ENCODE measurements at regions of chr1 and their contacts with region 1.

Region 1: DNA sequence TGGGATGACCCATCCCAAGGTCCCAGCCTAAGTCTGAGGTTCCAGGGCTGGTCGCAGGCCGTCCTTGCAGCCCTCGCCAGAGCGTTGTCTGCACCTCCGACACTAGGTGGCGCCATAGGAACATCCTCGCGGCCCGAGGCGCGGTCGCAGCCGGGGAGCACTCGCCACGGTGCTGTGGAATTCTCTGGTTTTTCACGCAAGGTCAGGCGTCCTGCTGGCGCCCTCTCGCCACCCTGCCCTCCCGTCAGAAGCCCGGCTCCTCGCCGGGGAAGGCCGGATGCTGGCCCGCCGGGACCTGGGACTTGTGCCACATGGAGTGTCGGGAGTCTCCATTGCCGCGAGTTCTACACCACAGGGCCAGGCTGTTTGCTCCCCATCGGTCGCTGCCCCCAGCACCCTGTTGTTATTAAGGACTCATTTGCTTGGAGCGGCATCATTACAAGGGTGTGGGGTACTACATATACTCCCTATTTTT is 196.8 kb upstream of the LMO4 start:
- DNase-seq: peak; percentile 47
- ATAC-seq: peak; percentile 97
- H3K4me3 ChIP-seq: peak overlapping the region; percentile 41 to 70 (median 42); a peak in 5 of 6 replicates
- H3K27ac ChIP-seq: no peak overlapping the region
- H3K4me1 ChIP-seq: no peaks in the 10 kb centered on the region
- H3K27me3 ChIP-seq: peaks cover 3 to 33% of the 10 kb centered on the region in 2 experiments; a peak in 3 of 5 replicates
- CTCF ChIP-seq: peak; percentile 98
- EP300 ChIP-seq: no peak
- POLR2A ChIP-seq: no peak
- RAD21 ChIP-seq: peak; percentile 94

Region 2: GRCh38 chr1:87151500-87152421 is 19.9 kb after region 1 on chr1:
- CTCF ChIA-PET with region 1: no interaction called
- POLR2A ChIA-PET with region 1: no interaction called
- in situ Hi-C with region 1: no loop called
- intact Hi-C with region 1: no loop called
- DNase-seq: no peak
- ATAC-seq: no peak
- H3K4me3 ChIP-seq: no peak overlapping the region
- H3K27ac ChIP-seq: no peak overlapping the region
- H3K4me1 ChIP-seq: no peaks in the 10 kb centered on the region
- H3K27me3 ChIP-seq: peaks cover 1 to 8% of the 10 kb centered on the region in 2 experiments; a peak in 3 of 5 replicates
- CTCF ChIP-seq: no peak
- EP300 ChIP-seq: no peak
- POLR2A ChIP-seq: no peak
- RAD21 ChIP-seq: no peak

Region 3: GRCh38 chr1:87266284-87266683 is 134.4 kb after region 1 on chr1:
- CTCF ChIA-PET with region 1: no interaction called
- POLR2A ChIA-PET with region 1: no interaction called
- in situ Hi-C with region 1: no loop called
- intact Hi-C with region 1: loop called (anchors 1 kb)
- DNase-seq: no peak
- ATAC-seq: no peak
- H3K4me3 ChIP-seq: no peak overlapping the region
- H3K27ac ChIP-seq: no peak overlapping the region
- H3K4me1 ChIP-seq: no peaks in the 10 kb centered on the region
- H3K27me3 ChIP-seq: 0 out of 5 replicates have a peak, but pooled peaks cover 0 to 3% of the 10 kb centered on the region in 2 experiments
- CTCF ChIP-seq: no peak
- EP300 ChIP-seq: no peak
- POLR2A ChIP-seq: no peak
- RAD21 ChIP-seq: no peak

Region 4: DNA sequence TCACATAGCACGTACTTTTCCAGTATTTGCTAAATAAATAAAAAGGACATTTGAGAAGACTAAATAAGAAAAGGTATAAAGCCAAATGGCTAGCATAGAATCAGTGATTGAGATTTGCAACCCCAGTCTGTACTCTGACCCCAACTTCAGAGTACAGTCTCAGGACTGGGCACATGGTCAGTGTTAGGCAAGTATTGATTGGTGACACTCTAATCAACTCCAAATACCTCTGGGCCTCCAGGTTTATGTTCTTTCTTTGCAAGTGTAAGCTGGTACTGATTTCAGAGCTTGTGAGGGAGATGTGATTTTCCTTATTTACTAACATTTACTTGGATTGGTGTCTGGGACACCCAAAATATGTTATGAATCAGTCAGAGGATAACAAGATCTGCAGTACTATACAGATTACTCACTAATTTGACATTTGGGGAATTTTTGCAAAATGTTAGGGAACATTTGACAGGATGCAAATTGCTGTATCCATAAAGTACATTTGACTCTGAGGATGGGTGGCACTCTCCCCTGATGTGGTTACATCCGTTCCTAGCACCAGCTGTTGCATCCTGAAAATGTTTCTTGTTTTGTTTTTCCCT is 231.1 kb after region 1 on chr1:
- CTCF ChIA-PET with region 1: no interaction called
- POLR2A ChIA-PET with region 1: no interaction called
- in situ Hi-C with region 1: no loop called
- intact Hi-C with region 1: no loop called
- DNase-seq: no peak
- ATAC-seq: no peak
- H3K4me3 ChIP-seq: no peak overlapping the region
- H3K27ac ChIP-seq: no peak overlapping the region
- H3K4me1 ChIP-seq: 0 out of 2 replicates have a peak, but pooled peaks cover 7% of the 10 kb centered on the region
- H3K27me3 ChIP-seq: no peaks in the 10 kb centered on the region
- CTCF ChIP-seq: no peak
- EP300 ChIP-seq: no peak
- POLR2A ChIP-seq: no peak
- RAD21 ChIP-seq: no peak